ENCODE measurements at regions of chr19 and their contacts with region 1.

Region 1: DNA sequence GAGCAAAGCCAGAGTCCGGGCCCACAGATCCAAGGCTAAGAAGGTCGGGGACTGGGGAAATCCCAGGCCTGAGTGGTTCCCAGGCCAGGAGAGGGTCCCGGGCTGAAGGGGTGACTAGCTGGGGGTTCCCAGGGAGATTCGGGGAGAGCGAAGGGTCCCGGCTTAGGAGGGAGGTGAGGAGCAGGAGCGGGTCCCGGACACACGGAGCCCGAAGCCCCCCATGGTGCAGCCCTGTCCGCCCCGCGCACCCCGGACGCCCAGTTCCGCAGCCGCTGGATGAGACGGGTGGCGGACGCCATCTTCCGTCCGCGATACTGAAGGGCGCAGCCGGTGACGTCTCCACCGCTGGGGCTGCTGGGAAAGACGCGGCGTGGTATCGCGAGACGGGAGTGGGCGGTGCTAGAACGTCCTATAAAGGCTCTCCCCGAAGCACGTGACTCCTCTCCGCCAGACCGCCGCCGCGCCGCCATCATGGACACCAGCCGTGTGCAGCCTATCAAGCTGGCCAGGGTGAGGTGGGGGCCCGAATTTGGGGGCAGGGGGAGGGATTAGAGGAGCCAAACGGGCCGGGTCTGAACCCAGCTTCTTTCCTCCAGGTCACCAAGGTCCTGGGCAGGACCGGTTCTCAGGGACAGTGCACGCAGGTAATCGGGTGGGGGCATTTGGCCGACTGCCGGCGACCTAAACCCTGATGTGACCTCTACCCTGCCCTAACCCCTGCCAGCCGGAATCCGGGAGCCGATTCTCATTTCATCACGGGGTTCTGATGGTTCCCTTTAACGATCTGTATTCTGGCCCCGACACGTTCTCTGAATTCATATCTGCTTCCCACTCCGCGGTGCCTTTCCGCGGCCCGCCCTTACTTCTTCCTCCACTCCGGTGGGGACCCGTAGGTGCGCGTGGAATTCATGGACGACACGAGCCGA is at the starts of genes NDUFA7 and RPS28:
- DNase-seq: peak; percentile 99
- H3K4me3 Mint-ChIP-seq: peak within 1 kb of the TSS; percentile 100
- H3K27ac Mint-ChIP-seq: peak within 1 kb of the TSS; percentile 99
- H3K4me1 Mint-ChIP-seq: peaks cover 21% of the 10 kb centered on the region
- H3K27me3 Mint-ChIP-seq: no peaks in the 10 kb centered on the region
- total RNA-seq, gene NDUFA7: 52.9 and 54.3 TPM in 2 replicates
- total RNA-seq, gene RPS28: 2,054 and 2,121 TPM in 2 replicates

Region 2: DNA sequence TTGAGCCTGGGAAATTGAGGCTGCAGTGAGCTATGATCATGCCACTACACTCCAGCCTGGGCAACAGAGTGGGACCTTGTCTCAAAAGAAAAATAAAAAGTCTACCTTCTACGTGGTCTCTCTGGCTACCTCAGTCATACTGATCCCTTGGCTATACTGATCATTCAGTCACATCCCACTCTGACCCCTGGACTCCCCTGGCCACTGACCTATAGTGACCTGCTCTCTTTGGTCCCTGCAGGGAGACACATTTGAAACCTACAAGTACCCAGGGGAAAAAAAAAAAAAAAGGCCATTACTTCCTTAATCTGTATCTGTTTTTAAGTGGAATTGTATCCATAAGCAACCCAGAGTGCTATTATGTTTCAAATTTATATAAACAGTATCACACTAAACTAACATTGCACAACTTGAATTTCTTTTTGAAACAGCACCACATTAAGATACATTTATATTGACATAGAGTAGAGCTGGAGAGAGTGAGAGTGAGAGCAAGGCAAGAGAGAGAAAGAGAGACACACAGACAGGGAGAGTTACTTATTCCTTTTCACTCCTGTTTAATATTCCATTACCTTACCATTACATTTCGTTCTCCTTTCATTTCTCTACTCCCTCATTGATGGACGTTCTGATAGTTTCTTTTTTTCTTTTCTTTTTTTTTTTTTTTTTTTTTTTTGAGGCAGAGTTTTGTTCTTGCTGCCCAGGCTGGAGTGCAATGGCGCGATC is 135.8 kb before region 1 on chr19:
- intact Hi-C with region 1: no loop called
- DNase-seq: no peak
- H3K4me3 Mint-ChIP-seq: no peak overlapping the region
- H3K27ac Mint-ChIP-seq: peak overlapping the region; percentile 22
- H3K4me1 Mint-ChIP-seq: peaks cover 12% of the 10 kb centered on the region
- H3K27me3 Mint-ChIP-seq: peaks cover 2% of the 10 kb centered on the region

Region 3: GRCh38 chr19:8252922-8253589 is 68.3 kb before region 1 on chr19:
- intact Hi-C with region 1: loop called (anchors 5 kb)
- DNase-seq: peak; percentile 95
- H3K4me3 Mint-ChIP-seq: no peak overlapping the region
- H3K27ac Mint-ChIP-seq: no peak overlapping the region
- H3K4me1 Mint-ChIP-seq: peaks cover 9% of the 10 kb centered on the region
- H3K27me3 Mint-ChIP-seq: no peaks in the 10 kb centered on the region

Region 4: DNA sequence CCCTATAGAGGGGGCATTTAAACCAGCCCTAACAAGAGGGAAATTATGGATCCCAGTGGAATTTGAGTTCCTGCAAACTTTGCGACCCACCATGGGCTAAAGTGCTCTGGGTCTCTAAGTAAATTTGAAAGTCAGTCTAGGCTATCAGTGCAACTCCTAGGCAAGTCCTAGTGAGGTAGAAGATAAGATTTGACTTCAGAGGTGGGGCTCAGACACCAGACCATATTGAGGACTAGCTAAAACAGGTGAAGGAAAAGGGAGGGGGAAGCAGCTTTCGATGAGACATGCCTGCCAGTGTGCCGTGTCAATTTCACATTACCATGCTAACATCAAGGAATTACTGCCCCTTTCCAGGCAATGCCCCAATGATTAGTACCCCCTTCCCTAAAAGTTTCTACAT is 51.6 kb before region 1 on chr19:
- intact Hi-C with region 1: loop called (anchors 1 kb)
- DNase-seq: peak; percentile 55
- H3K4me3 Mint-ChIP-seq: peak overlapping the region; percentile 81
- H3K27ac Mint-ChIP-seq: peak overlapping the region; percentile 92
- H3K4me1 Mint-ChIP-seq: peaks cover 23% of the 10 kb centered on the region
- H3K27me3 Mint-ChIP-seq: no peaks in the 10 kb centered on the region

Region 5: GRCh38 chr19:8307965-8308866 is 13.1 kb before region 1 on chr19 and contains the start of gene CD320:
- intact Hi-C with region 1: loop called (anchors 1 kb)
- DNase-seq: peak; percentile 97
- H3K4me3 Mint-ChIP-seq: peak within 1 kb of the TSS; percentile 98
- H3K27ac Mint-ChIP-seq: peak within 1 kb of the TSS; percentile 93
- H3K4me1 Mint-ChIP-seq: peaks cover 31% of the 10 kb centered on the region
- H3K27me3 Mint-ChIP-seq: no peaks in the 10 kb centered on the region
- total RNA-seq, gene CD320: 110 and 113 TPM in 2 replicates

Region 6: DNA sequence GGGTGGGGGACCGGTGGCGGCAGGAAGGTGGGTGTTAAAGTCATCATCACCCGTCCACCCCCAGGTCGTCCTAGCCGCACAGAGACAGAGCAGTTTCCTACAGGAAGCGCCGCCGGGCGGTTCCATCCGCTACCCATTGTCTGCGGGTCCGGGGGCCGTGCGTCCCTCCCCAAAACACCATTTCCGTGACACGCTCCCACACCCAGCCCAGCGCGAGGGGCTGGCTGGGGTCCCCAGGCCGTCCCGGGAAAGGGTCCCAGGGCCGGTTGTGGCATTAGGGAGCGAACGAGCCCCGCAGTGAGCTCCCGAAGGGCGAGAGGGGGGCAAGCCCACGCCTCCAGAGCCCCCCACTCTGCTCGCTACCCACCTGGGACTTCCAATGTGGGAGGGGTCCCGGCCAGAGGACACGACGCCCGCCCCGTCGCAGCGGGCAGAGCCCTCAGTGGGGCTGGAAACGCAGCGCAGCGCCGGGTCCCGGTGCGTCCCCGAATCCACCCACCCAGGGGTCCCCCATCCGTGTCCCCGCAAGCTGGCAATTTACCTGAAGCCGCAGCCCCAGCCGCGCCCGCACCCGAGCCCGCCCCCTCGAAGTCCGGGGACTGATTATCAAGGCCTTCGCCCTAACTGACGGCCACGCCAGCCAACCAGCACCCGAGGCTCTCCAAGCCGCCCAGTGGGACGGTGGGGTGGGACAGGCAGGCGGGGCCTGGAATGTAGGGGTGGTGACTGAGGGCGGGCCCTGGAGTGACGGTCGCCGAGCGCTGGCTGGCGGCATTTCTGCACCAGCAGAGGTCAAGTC is 21.6 kb after region 1 on chr19 and contains the start of gene KANK3:
- intact Hi-C with region 1: no loop called
- DNase-seq: peak; percentile 96
- H3K4me3 Mint-ChIP-seq: peak within 1 kb of the TSS; percentile 76
- H3K27ac Mint-ChIP-seq: peak within 1 kb of the TSS; percentile 20
- H3K4me1 Mint-ChIP-seq: peaks cover 9% of the 10 kb centered on the region
- H3K27me3 Mint-ChIP-seq: peaks cover 31% of the 10 kb centered on the region
- total RNA-seq, gene KANK3: 0.85 and 1.5 TPM in 2 replicates